ENCODE measurements at regions of chr14 and their contacts with region 1.

Region 1: DNA sequence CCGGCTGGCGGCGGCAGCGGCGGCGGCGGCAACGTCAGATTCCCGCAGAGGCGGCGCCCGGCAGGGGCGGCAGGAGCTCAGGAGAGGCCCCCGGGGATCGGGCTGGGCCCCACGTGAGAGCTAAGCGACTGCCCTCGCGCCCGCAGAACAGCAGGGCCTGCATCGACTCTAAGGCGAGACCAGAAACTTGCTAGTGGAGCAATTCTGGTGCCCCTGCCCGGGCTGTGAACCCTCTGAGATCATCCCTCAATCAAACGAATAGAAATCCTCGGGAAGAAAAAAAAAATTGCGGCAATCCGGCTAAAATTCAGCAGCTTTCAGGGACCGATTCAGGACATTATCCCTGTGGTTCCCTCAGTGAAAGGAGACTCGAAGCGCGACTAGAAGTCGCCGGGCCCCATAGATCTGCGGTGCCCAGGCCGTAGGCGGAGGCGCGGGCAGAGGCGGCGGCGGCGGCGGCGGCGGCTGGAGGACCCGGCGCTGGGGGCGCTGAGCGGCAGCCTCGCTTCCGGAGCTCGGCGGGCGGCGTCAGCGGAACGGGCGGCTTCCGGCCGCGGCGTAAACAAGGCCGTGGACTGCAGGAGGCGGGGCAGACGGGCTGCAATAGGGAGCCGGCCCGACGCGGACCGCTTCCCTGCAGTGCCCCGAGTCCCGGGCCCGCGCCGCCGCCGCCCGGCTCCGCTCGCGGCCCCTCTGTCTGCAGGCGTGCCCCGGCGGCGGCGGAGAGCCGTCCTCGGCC is at the start of gene KLHDC2:
- DNase-seq: peak; percentile 93
- ATAC-seq: peak; percentile 88
- H3K4me3 Mint-ChIP-seq: peak within 1 kb of the TSS; percentile 98
- H3K27ac Mint-ChIP-seq: peak within 1 kb of the TSS; percentile 100
- H3K4me1 Mint-ChIP-seq: peaks cover 26% of the 10 kb centered on the region
- H3K27me3 Mint-ChIP-seq: no peaks in the 10 kb centered on the region
- total RNA-seq, gene KLHDC2: 43.6 to 44.1 TPM

Region 2: GRCh38 chr14:49526101-49526500 is 241.6 kb before region 1 on chr14:
- POLR2A ChIA-PET with region 1: no interaction called
- DNase-seq: no peak
- ATAC-seq: no peak
- H3K4me3 Mint-ChIP-seq: no peak overlapping the region
- H3K27ac Mint-ChIP-seq: no peak overlapping the region
- H3K4me1 Mint-ChIP-seq: no peaks in the 10 kb centered on the region
- H3K27me3 Mint-ChIP-seq: peaks cover 10% of the 10 kb centered on the region

Region 3: DNA sequence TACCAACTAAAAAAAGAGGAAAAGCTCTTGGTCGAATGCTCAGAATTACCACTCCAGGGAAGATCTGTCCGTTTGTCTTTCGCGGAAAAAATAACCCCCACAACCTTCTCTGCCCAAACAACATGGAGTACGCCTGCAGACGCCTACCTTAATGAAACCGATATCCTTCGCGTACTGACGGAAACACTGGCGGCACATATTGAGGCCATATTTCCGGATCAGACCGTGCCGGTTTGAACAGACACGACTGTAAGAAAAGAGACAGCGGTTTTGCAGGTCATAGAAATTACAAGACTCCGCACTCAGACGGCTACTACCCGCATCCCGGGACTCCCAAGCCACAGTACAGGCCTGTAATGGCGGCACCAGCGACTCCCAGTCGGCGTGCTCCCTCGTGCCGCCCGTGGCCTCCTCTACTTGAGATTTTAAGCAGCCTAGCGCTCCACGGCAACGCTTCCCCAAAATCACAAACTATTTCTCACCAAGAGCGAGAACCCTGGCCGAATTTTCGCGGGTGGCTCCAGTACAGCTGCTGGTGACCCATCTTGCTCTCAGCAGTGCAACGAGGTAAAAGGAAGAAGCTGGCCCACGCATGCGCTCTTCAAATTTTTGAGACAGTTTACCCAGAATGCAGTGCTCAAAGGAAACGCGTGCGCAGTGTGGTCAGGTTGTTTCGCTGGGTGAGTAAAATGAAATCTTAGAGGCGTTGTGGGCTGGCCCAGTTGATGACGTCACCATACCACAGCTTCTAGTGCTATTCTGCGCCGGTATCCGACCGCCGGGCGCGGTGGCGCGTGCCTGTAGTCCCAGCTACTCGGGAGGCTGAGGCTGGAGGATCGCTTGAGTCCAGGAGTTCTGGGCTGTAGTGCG is 181.7 kb before region 1 on chr14 and contains the start of gene RPS29:
- POLR2A ChIA-PET with region 1: interaction called, 21 read pairs
- DNase-seq: peak; percentile 98
- ATAC-seq: peak; percentile 89
- H3K4me3 Mint-ChIP-seq: peak within 1 kb of the TSS; percentile 94
- H3K27ac Mint-ChIP-seq: peak within 1 kb of the TSS; percentile 99
- H3K4me1 Mint-ChIP-seq: peaks cover 42% of the 10 kb centered on the region
- H3K27me3 Mint-ChIP-seq: no peaks in the 10 kb centered on the region
- total RNA-seq, gene RPS29: 1,762 to 1,786 TPM

Region 4: GRCh38 chr14:49620182-49621113 is 147.3 kb before region 1 on chr14 and contains the starts of genes MGAT2 and RPL36AL:
- POLR2A ChIA-PET with region 1: interaction called, 31 read pairs
- DNase-seq: peak; percentile 95
- ATAC-seq: peak; percentile 91
- H3K4me3 Mint-ChIP-seq: peak within 1 kb of the TSS; percentile 97
- H3K27ac Mint-ChIP-seq: peak within 1 kb of the TSS; percentile 94
- H3K4me1 Mint-ChIP-seq: peaks cover 34% of the 10 kb centered on the region
- H3K27me3 Mint-ChIP-seq: no peaks in the 10 kb centered on the region
- total RNA-seq, gene MGAT2: 54.6 to 55.0 TPM
- total RNA-seq, gene RPL36AL: 238 to 254 TPM

Region 5: GRCh38 chr14:49633640-49634546 is 133.8 kb before region 1 on chr14:
- POLR2A ChIA-PET with region 1: interaction called, 30 read pairs
- DNase-seq: peak; percentile 94
- ATAC-seq: peak; percentile 85
- H3K4me3 Mint-ChIP-seq: peak overlapping the region; percentile 99
- H3K27ac Mint-ChIP-seq: peak overlapping the region; percentile 90
- H3K4me1 Mint-ChIP-seq: peaks cover 32% of the 10 kb centered on the region
- H3K27me3 Mint-ChIP-seq: no peaks in the 10 kb centered on the region

Region 6: GRCh38 chr14:49692811-49693734 is 74.7 kb before region 1 on chr14 and contains the start of gene KLHDC1:
- POLR2A ChIA-PET with region 1: interaction called, 43 read pairs
- DNase-seq: peak; percentile 81
- ATAC-seq: peak; percentile 78
- H3K4me3 Mint-ChIP-seq: peak within 1 kb of the TSS; percentile 84
- H3K27ac Mint-ChIP-seq: peak within 1 kb of the TSS; percentile 89
- H3K4me1 Mint-ChIP-seq: peaks cover 17% of the 10 kb centered on the region
- H3K27me3 Mint-ChIP-seq: no peaks in the 10 kb centered on the region
- total RNA-seq, gene KLHDC1: 4.6 to 5.6 TPM

Region 7: GRCh38 chr14:49786315-49787110 is 18.8 kb after region 1 on chr14:
- POLR2A ChIA-PET with region 1: interaction called, 16 read pairs
- DNase-seq: no peak
- ATAC-seq: no peak
- H3K4me3 Mint-ChIP-seq: no peak overlapping the region
- H3K27ac Mint-ChIP-seq: no peak overlapping the region
- H3K4me1 Mint-ChIP-seq: no peaks in the 10 kb centered on the region
- H3K27me3 Mint-ChIP-seq: no peaks in the 10 kb centered on the region

Region 8: GRCh38 chr14:49852301-49853157 is 84.8 kb after region 1 on chr14 and contains the start of gene NEMF:
- POLR2A ChIA-PET with region 1: interaction called, 22 read pairs
- DNase-seq: peak; percentile 81
- ATAC-seq: peak; percentile 80
- H3K4me3 Mint-ChIP-seq: peak within 1 kb of the TSS; percentile 99
- H3K27ac Mint-ChIP-seq: peak within 1 kb of the TSS; percentile 99
- H3K4me1 Mint-ChIP-seq: peaks cover 29% of the 10 kb centered on the region
- H3K27me3 Mint-ChIP-seq: no peaks in the 10 kb centered on the region
- total RNA-seq, gene NEMF: 90.1 to 91.1 TPM

Measured in activated naive CD8-positive, alpha-beta T cell treated with anti-CD3 and anti-CD28 coated beads, Interleukin-2, amount 10 ng/mL, durations not matched to agents 7 days and 5 days (primary cell).